Adrenal gland (tissue), 19 donors: ENCODE measurements at regions of chr2 and their contacts with region 1.

Region 1: DNA sequence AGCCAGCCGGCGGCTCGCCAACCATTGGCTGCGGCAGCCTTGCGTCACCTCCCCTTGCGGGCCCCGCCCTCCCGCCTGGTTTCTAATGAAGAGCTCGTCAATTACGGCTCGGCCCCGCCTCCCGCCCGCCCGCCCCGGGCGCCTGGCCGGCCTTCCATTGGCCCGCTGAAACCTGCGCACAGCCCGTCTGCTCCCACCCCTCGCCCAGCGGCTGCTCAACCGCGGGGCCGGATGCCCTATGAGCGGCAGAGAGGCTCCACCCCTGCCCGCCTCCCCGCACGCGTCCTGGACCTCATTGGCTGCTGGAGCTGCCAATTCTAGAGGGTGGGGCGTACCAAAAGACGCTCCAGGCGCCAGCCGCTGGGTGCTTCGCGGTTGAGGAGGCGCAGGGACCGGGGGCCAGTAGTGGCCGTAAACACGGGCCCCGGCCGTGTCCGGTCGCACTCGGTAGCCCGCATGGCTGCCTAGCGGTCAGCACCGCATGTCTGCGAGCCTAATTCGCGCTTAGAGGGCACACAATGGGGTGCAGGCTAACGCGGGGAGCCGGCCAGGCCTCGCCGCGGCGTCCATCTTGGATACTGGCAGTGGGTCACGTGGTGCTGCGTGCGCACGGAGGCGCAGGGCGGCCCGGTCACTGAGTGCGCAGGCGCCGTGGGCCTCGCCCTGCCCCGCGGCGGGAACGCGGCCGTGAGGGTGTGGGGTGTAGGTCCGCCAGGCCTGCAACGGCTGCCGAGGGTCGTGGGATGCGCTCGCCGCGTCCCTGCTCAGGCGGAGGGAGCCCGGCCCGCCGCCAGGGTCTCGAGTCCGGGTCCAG is 454 bp upstream of the HDAC4 start:
- DNase-seq: peak; percentile 99 to 100 (median 99)
- H3K4me3 ChIP-seq: peak overlapping the region; percentile 65 to 81 (median 69)
- H3K27ac ChIP-seq: peak overlapping the region; percentile 97 to 100 (median 99)
- H3K4me1 ChIP-seq: peaks cover 25 to 44% of the 10 kb centered on the region in 2 donors
- H3K27me3 ChIP-seq: no peaks in the 10 kb centered on the region
- CTCF ChIP-seq: peak in 1 of 6 experiments; percentile 10
- POLR2A ChIP-seq: peak; percentile 96

Region 2: DNA sequence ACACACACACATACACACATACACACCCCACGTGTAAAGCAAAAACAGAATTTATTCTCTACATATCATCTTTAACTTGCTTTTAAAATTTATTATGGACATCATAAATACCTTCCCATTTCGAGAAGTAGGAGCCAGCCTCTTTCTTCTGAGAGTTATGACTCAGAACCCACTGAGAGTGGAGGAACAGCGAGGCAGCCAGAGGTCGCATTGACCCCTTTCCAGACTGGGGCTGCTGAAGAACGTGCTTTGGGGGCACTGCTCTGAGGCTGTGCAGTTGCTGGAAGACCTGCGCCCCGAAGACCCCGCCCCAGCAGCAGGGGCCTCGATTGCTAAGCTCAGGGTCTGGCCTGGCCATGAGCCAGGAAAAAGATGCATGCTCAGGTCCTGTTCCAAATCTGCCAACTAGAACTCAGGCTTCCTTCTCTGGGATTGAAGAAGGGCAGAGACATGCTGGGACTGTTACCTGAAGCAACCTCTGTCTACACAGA is 687.2 kb before region 1 on chr2:
- intact Hi-C with region 1: no loop called
- DNase-seq: peak in 1 of 7 donors; percentile 35
- H3K4me3 ChIP-seq: no peak overlapping the region
- H3K27ac ChIP-seq: no peak overlapping the region
- H3K4me1 ChIP-seq: no peaks in the 10 kb centered on the region
- H3K27me3 ChIP-seq: no peaks in the 10 kb centered on the region
- CTCF ChIP-seq: no peak
- POLR2A ChIP-seq: no peak

Region 3: DNA sequence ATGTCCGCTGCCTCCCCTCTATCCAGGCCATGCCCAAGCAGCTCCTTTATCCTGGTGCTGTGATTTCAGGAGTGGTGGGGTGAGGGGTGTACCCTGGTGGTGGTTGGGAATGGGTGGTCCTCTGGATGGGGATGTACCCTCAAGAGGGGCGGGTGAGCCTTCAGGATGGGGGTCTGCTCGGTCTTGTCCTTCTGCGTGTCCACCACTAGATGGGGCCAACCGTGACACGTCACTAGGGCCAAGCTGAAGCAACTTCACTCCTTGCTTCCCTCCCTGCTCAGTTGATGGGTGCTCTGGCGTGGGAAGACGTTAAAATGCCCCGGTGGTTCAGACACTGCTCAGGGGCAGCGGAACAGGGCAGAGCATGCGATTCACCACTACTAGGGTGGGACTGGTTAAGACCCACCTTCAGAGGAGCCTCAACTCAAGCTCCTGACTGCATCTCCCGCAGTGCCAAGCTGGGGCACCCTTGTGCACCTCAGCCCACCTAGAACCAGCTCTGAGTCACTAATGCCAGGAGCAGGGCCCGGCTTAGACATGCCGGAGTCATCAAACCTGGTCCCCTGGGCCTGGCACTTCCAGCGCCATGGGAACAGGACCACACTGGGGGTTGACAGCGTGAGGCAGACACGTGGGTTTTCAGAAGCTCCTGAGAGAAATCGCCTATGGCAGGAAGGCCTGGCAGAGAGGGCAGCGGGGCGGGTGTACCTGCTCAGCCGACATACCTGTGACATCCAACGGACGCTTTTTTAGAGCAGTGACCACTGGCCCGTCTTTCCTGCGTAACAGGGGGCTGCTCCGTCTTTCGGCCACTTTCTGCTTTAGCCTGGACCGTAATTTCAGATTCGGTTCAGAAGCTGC is 257.2 kb before region 1 on chr2:
- intact Hi-C with region 1: loop called in 1 of 2 experiments (anchors 10 kb)
- DNase-seq: peak in 5 of 7 donors; percentile 35 to 57 (median 42)
- H3K4me3 ChIP-seq: no peak overlapping the region
- H3K27ac ChIP-seq: no peak overlapping the region
- H3K4me1 ChIP-seq: no peaks in the 10 kb centered on the region
- H3K27me3 ChIP-seq: no peaks in the 10 kb centered on the region
- CTCF ChIP-seq: peak; percentile 31 to 75 (median 62)
- POLR2A ChIP-seq: no peak

Region 4: GRCh38 chr2:239222312-239222660 is 179.0 kb before region 1 on chr2:
- intact Hi-C with region 1: no loop called
- DNase-seq: peak in 4 of 7 donors; percentile 29 to 51 (median 32)
- H3K4me3 ChIP-seq: peak overlapping the region in 1 of 4 donors; percentile 28
- H3K27ac ChIP-seq: peak overlapping the region; percentile 79 to 95 (median 94)
- H3K4me1 ChIP-seq: peaks cover 18 to 69% of the 10 kb centered on the region in 2 donors
- H3K27me3 ChIP-seq: no peaks in the 10 kb centered on the region
- CTCF ChIP-seq: no peak
- POLR2A ChIP-seq: peak in 1 of 2 donors; percentile 6

Region 5: GRCh38 chr2:239275044-239275685 is 126.1 kb before region 1 on chr2:
- intact Hi-C with region 1: no loop called
- DNase-seq: peak; percentile 78 to 94 (median 90)
- H3K4me3 ChIP-seq: peak overlapping the region in 1 of 4 donors; percentile 30
- H3K27ac ChIP-seq: peak overlapping the region; percentile 64 to 96 (median 93)
- H3K4me1 ChIP-seq: peaks cover 18 to 50% of the 10 kb centered on the region in 2 donors
- H3K27me3 ChIP-seq: no peaks in the 10 kb centered on the region
- CTCF ChIP-seq: peak in 2 of 6 experiments; percentile 17 to 18
- POLR2A ChIP-seq: peak in 1 of 2 donors; percentile 69

Region 6: DNA sequence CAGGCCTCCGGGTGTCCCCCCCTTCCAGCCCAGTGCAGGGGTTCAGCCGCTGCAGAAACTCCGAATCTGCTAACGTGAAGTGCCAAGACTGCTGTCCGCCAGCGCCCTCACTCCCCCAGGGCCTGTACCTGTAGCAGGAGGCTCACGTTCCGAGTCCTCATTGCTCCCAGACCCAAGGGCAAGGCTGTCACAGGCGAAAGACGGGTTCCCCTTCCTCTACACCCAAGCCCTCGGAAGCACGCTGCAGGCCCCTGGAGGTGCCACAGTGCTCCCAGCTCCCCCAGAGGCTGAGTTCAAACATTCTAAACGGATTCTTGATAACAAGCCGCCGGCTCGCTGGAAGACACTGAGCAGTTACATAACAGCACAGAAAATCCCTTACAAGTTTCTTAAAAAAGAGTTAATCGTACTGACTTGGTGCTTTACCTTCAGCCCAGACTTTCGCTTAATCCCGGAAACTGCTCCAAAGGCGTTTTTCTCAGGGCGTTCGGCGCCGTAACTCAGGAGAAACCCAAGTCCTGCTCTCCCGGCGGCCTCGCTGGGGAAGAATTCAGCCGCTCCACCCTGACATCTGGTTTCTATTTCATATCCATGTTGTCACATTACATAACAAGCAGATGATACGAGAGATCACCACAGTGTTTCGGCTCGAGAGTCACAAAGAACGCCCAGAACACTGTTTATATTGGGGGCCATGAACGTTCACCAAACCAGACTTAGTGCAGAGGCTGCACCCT is 92.4 kb before region 1 on chr2:
- intact Hi-C with region 1: loop called (anchors 10 kb)
- DNase-seq: peak; percentile 45 to 83 (median 60)
- H3K4me3 ChIP-seq: peak overlapping the region in 1 of 4 donors; percentile 37
- H3K27ac ChIP-seq: peak overlapping the region in 4 of 5 donors; percentile 56 to 86 (median 77)
- H3K4me1 ChIP-seq: peaks cover 21 to 75% of the 10 kb centered on the region in 2 donors
- H3K27me3 ChIP-seq: no peaks in the 10 kb centered on the region
- CTCF ChIP-seq: peak in 1 of 6 experiments; percentile 23
- POLR2A ChIP-seq: peak in 1 of 2 donors; percentile 57

Region 7: GRCh38 chr2:239318790-239319661 is 82.2 kb before region 1 on chr2:
- intact Hi-C with region 1: loop called in 1 of 2 experiments (anchors 10 kb)
- DNase-seq: peak; percentile 56 to 86 (median 76)
- H3K4me3 ChIP-seq: peak overlapping the region in 1 of 4 donors; percentile 43
- H3K27ac ChIP-seq: peak overlapping the region; percentile 9 to 95 (median 81)
- H3K4me1 ChIP-seq: peaks cover 36 to 51% of the 10 kb centered on the region in 2 donors
- H3K27me3 ChIP-seq: no peaks in the 10 kb centered on the region
- CTCF ChIP-seq: no peak
- POLR2A ChIP-seq: peak in 1 of 2 donors; percentile 55

Region 8: DNA sequence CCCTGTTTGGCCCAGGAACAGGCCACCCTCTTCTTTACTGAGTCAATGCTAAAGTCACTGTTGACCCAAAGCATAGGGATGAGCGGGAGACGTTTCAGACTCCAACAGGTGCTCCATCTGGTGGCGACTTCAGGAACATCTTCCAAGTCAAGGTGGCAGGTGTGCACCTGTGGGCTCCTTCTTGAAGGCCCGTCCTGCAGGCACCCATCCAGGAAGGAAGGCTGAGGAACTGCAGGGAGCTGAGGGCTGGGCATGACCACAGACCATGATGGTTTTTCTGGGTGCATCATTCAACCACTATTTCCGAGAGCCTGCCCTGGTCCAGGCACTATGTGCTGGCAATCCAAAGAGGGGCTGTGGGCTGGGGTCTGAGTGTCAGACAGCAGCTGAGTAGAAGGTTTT is 481.1 kb after region 1 on chr2:
- intact Hi-C with region 1: loop called in 1 of 2 experiments (anchors 10 kb)
- DNase-seq: peak; percentile 44 to 77 (median 58)
- H3K4me3 ChIP-seq: no peak overlapping the region
- H3K27ac ChIP-seq: peak overlapping the region in 1 of 5 donors; percentile 77
- H3K4me1 ChIP-seq: peaks cover 0 to 9% of the 10 kb centered on the region in 2 donors
- H3K27me3 ChIP-seq: no peaks in the 10 kb centered on the region
- CTCF ChIP-seq: peak; percentile 53 to 78 (median 63)
- POLR2A ChIP-seq: no peak